PC-9 (cell line): ENCODE measurements at regions of chr17 and their contacts with region 1.

Region 1: GRCh38 chr17:41688699-41689496 is at the start of gene EIF1:
- DNase-seq: peak; percentile 96 to 99
- H3K4me3 ChIP-seq: peak within 1 kb of the TSS; percentile 88
- H3K27ac ChIP-seq: peak within 1 kb of the TSS; percentile 99
- H3K4me1 ChIP-seq: peaks cover 23% of the 10 kb centered on the region
- H3K27me3 ChIP-seq: no peaks in the 10 kb centered on the region; the same call in 1 of the 2 replicates
- CTCF ChIP-seq: no peak
- total RNA-seq, gene EIF1: 775 and 874 TPM in 2 replicates

Region 2: DNA sequence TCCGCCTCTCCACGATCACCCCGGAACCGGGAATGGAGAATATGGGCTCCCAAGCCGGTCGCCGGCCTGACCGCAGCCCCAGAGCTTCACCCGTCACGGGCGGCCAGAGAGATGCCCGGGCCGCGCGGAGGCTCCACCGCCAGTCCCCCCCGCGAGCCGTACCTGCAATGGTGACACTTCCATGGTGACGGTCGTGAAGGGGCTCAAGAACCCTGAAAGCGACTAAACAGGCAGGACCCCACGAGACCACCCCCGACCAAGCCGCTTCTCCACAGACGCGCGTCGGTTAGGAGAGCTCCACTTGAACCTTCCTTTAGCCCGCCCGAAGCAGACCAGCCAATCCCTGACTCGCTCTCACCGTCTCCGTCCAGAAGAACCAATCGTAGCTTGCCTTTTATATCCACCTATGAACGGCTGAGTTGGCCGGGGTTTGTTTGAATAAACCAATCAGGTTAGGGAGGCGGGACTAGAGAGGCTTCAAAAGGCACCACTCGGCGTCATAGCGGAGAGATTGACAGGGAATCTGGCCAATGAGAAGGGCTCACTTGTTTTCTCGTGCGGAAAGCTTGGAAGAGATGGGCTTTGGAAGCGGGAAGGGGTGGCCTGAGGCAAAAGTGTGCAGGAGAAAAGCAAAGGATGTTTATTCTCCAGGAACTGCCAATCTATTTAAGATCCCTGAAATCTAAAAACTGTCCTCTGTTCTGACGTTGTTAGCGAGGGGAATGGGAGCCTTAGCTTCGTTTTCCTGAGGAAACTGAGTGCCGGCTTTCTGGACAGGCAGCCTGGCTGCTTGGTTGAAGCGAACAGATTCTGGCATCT is 1271.1 kb before region 1 on chr17 and contains the start of gene TOP2A:
- CTCF ChIA-PET with region 1: no interaction called
- POLR2A ChIA-PET with region 1: interaction called, 10 read pairs
- intact Hi-C with region 1: no loop called
- DNase-seq: peak; percentile 96 to 98
- H3K4me3 ChIP-seq: peak within 1 kb of the TSS; percentile 93
- H3K27ac ChIP-seq: no peak within 1 kb of the TSS
- H3K4me1 ChIP-seq: peaks cover 33% of the 10 kb centered on the region
- H3K27me3 ChIP-seq: no peaks in the 10 kb centered on the region
- CTCF ChIP-seq: no peak
- total RNA-seq, gene TOP2A: 156 and 235 TPM in 2 replicates

Region 3: GRCh38 chr17:41127371-41127770 is 561.5 kb before region 1 on chr17:
- CTCF ChIA-PET with region 1: no interaction called
- POLR2A ChIA-PET with region 1: no interaction called
- intact Hi-C with region 1: no loop called
- DNase-seq: peak in 1 of 2 experiments; percentile 66
- H3K4me3 ChIP-seq: no peak overlapping the region
- H3K27ac ChIP-seq: no peak overlapping the region
- H3K4me1 ChIP-seq: peaks cover 17% of the 10 kb centered on the region
- H3K27me3 ChIP-seq: no peaks in the 10 kb centered on the region
- CTCF ChIP-seq: no peak

Region 4: DNA sequence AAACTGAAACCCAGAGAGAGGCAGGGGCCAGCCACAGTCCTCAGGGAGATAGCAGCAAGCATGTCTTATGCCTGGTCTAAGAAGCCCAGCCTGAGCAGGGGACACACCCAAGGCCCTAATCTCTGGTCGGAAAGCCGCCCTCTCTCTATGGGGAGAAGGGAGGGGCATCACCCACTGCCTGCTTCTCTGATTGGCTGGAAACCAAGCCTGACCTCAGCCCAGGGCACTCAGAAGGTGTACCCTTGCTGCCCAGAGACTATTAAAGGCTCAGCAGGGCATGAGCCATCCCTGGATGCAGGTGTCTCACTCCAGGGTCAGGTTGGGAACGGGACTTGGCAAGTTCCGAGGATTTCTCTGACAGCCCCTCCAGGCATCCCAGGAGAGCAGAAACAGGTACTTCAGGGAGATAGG is 177.8 kb before region 1 on chr17:
- CTCF ChIA-PET with region 1: no interaction called
- POLR2A ChIA-PET with region 1: no interaction called
- intact Hi-C with region 1: no loop called
- DNase-seq: no peak
- H3K4me3 ChIP-seq: no peak overlapping the region
- H3K27ac ChIP-seq: no peak overlapping the region
- H3K4me1 ChIP-seq: peaks cover 53% of the 10 kb centered on the region
- H3K27me3 ChIP-seq: no peaks in the 10 kb centered on the region
- CTCF ChIP-seq: no peak

Region 5: GRCh38 chr17:41728056-41728455 is 39.2 kb after region 1 on chr17:
- CTCF ChIA-PET with region 1: no interaction called
- POLR2A ChIA-PET with region 1: interaction called, 11 read pairs
- intact Hi-C with region 1: no loop called
- DNase-seq: no peak
- H3K4me3 ChIP-seq: no peak overlapping the region
- H3K27ac ChIP-seq: no peak overlapping the region
- H3K4me1 ChIP-seq: no peaks in the 10 kb centered on the region
- H3K27me3 ChIP-seq: peaks cover 12% of the 10 kb centered on the region
- CTCF ChIP-seq: no peak

Region 6: GRCh38 chr17:41801374-41802271 is 112.7 kb after region 1 on chr17:
- CTCF ChIA-PET with region 1: no interaction called
- POLR2A ChIA-PET with region 1: interaction called, 23 read pairs
- intact Hi-C with region 1: loop called (anchors 5 kb)
- DNase-seq: peak; percentile 84 to 87
- H3K4me3 ChIP-seq: peak overlapping the region; percentile 35; the same call in 1 of the 2 replicates
- H3K27ac ChIP-seq: peak overlapping the region; percentile 86
- H3K4me1 ChIP-seq: peaks cover 24% of the 10 kb centered on the region
- H3K27me3 ChIP-seq: no peaks in the 10 kb centered on the region
- CTCF ChIP-seq: peak; percentile 98

Region 7: GRCh38 chr17:41930009-41930832 is 241.3 kb after region 1 on chr17 and contains the start of gene ODAD4:
- CTCF ChIA-PET with region 1: no interaction called
- POLR2A ChIA-PET with region 1: interaction called, 22 read pairs
- intact Hi-C with region 1: no loop called
- DNase-seq: peak; percentile 90 to 93
- H3K4me3 ChIP-seq: peak within 1 kb of the TSS; percentile 63
- H3K27ac ChIP-seq: peak within 1 kb of the TSS; percentile 44
- H3K4me1 ChIP-seq: peaks cover 27% of the 10 kb centered on the region
- H3K27me3 ChIP-seq: no peaks in the 10 kb centered on the region
- CTCF ChIP-seq: no peak; the same call in 1 of the 2 replicates
- total RNA-seq, gene ODAD4: 3.0 and 4.0 TPM in 2 replicates